Activated CD8-positive, alpha-beta T cell treated with anti-CD3 and anti-CD28 coated beads, Interleukin-2, amount 10 ng/mL, durations not matched to agents 7 days and 5 days (primary cell): ENCODE measurements at regions of chr1 and their contacts with region 1.

Region 1: GRCh38 chr1:84944767-84945486 is 51.9 kb upstream of the LPAR3 start:
- DNase-seq: peak; percentile 89
- ATAC-seq: peak; percentile 93
- H3K4me3 Mint-ChIP-seq: peak overlapping the region; percentile 79
- H3K27ac Mint-ChIP-seq: peak overlapping the region; percentile 73
- H3K4me1 Mint-ChIP-seq: peaks cover 15% of the 10 kb centered on the region
- H3K27me3 Mint-ChIP-seq: no peaks in the 10 kb centered on the region

Region 2: DNA sequence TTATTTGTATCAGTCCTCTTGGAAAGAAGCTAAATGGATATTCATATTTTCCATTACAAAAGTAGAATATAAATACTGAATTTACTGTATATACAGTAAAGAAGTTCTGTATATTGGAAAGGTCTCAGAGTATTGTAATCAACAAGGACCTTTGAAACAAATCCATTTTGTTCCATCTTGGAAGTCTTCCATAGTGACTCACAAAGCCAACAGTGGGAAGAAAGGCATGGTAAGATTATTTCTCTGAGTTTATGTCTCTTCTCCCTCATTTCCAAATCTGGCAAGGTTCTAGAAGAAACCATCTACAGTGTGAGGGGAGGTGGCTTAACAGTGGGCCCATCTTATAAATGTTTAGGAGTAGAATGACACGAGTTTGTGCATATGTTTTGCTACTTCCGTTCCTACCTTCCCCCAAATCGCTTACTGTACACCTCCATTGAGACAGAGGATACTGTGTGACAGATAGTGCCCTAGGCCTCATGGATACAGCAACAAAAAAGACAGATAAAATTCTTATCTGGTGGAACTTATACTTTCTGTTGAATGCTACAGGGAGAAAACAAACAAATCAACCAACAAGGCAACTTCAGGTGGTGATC is 232.6 kb before region 1 on chr1:
- CTCF ChIA-PET with region 1: no interaction called
- POLR2A ChIA-PET with region 1: no interaction called
- DNase-seq: no peak
- ATAC-seq: no peak
- H3K4me3 Mint-ChIP-seq: no peak overlapping the region
- H3K27ac Mint-ChIP-seq: no peak overlapping the region
- H3K4me1 Mint-ChIP-seq: no peaks in the 10 kb centered on the region
- H3K27me3 Mint-ChIP-seq: peaks cover 2% of the 10 kb centered on the region

Region 3: DNA sequence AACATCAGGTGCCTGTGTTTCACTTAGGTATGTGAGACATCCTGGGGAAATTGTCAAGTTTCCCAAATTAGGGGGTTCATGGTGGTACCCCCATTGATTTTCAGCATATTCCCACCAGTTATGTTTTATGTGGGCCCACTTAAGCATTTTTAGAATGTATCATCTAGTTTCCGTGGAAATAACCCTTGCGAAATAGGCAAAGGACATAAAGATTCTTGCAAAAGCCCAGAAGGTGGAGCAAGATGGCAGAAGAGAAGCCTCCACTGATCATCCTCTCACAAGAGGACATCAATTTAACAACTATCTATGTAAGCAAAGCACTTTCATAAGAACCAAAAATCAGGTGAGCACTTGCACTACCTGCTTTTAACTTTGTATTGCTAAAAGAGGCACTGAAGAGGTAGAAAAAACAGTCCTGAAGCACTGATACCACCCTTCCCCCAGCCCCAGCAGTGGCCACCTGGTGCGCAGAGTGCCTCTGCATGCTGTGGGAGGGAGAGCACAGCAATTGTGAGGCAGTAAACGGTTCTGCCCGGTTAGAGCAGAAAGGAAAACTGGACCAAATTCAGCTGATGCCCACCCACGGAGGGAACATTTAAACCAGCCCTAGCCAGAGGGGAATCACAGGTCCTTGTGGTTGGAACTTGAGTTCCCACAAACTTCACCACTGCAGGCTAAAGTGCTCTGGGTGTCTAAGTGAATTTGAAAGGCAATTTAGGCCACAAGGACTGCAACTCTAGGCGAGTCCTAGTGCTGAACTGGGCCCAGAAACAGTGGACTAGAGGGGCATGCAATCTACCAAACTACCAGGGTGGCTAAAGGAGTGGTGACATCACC is 28.8 kb after region 1 on chr1:
- CTCF ChIA-PET with region 1: interaction called, 31 read pairs
- POLR2A ChIA-PET with region 1: no interaction called
- DNase-seq: no peak
- ATAC-seq: no peak
- H3K4me3 Mint-ChIP-seq: no peak overlapping the region
- H3K27ac Mint-ChIP-seq: peak overlapping the region; percentile 56
- H3K4me1 Mint-ChIP-seq: peaks cover 55% of the 10 kb centered on the region
- H3K27me3 Mint-ChIP-seq: peaks cover 2% of the 10 kb centered on the region

Region 4: DNA sequence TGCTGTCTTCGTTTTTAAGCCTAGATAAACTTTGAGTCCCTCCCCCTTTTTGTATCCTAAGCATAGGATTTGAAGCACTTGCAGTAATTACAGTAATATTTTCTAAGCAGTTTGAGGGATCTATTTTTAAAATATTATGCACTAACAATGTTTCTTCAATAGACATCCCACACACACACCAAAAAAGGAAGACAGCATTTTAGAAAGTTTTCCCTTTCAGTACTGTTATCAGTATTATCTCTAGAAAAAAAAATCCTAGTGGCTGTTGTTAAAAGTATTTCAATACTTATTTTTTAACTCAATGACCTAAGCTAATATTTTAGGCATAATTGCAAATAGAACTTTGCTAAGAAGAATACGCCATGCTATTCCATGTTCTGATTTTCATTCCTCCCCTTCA is 88.3 kb after region 1 on chr1:
- CTCF ChIA-PET with region 1: interaction called, 279 read pairs
- POLR2A ChIA-PET with region 1: interaction called, 12 read pairs
- DNase-seq: no peak
- ATAC-seq: no peak
- H3K4me3 Mint-ChIP-seq: no peak overlapping the region
- H3K27ac Mint-ChIP-seq: no peak overlapping the region
- H3K4me1 Mint-ChIP-seq: no peaks in the 10 kb centered on the region
- H3K27me3 Mint-ChIP-seq: peaks cover 13% of the 10 kb centered on the region

Region 5: GRCh38 chr1:85148524-85149250 is 203.8 kb after region 1 on chr1:
- CTCF ChIA-PET with region 1: interaction called, 12 read pairs
- POLR2A ChIA-PET with region 1: no interaction called
- DNase-seq: peak; percentile 54
- ATAC-seq: peak; percentile 85
- H3K4me3 Mint-ChIP-seq: no peak overlapping the region
- H3K27ac Mint-ChIP-seq: peak overlapping the region; percentile 66
- H3K4me1 Mint-ChIP-seq: peaks cover 37% of the 10 kb centered on the region
- H3K27me3 Mint-ChIP-seq: peaks cover 2% of the 10 kb centered on the region

Region 6: GRCh38 chr1:85259118-85259911 is 314.4 kb after region 1 on chr1 and contains the start of gene C1orf52:
- CTCF ChIA-PET with region 1: interaction called, 304 read pairs
- POLR2A ChIA-PET with region 1: interaction called, 10 read pairs
- DNase-seq: peak; percentile 98
- ATAC-seq: peak; percentile 92
- H3K4me3 Mint-ChIP-seq: peak within 1 kb of the TSS; percentile 95
- H3K27ac Mint-ChIP-seq: peak within 1 kb of the TSS; percentile 97
- H3K4me1 Mint-ChIP-seq: peaks cover 32% of the 10 kb centered on the region
- H3K27me3 Mint-ChIP-seq: no peaks in the 10 kb centered on the region
- total RNA-seq, gene C1orf52: 25.5 to 29.5 TPM

Region 7: DNA sequence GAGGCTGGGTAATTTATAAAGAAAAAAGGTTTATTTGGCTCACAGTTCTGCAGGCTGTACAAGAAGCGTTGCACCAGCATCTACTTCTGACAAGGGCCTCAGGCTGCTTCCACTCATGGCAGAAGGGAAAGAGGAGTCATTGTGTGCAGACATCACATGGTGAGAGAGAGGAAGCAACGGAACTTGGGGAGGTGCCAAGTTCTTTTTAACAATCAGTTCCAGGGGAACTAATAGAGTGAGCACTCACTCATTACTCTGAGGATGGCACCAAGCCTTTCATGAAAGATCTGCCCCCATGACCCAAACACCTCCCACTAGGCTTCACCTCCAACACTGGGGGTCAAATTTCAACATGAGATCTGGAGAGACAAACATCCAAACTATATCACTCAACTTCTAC is 442.9 kb after region 1 on chr1:
- CTCF ChIA-PET with region 1: no interaction called
- POLR2A ChIA-PET with region 1: no interaction called
- DNase-seq: no peak
- ATAC-seq: no peak
- H3K4me3 Mint-ChIP-seq: no peak overlapping the region
- H3K27ac Mint-ChIP-seq: no peak overlapping the region
- H3K4me1 Mint-ChIP-seq: no peaks in the 10 kb centered on the region
- H3K27me3 Mint-ChIP-seq: peaks cover 3% of the 10 kb centered on the region